Naive thymus-derived CD8-positive, alpha-beta T cell (primary cell): ENCODE measurements at regions of chr15 and their contacts with region 1.

Region 1: GRCh38 chr15:28935326-28935725 is 49.6 kb downstream of the APBA2 start:
- DNase-seq: peak; percentile 55 to 85 (median 65)
- ATAC-seq: peak; percentile 68 to 78
- H3K4me3 Mint-ChIP-seq: peak overlapping the region; percentile 46 to 89 (median 74)
- H3K27ac Mint-ChIP-seq: peak overlapping the region; percentile 87 to 97 (median 97)
- H3K4me1 Mint-ChIP-seq: peaks cover 54 to 89% (median 85%) of the 10 kb centered on the region in 4 donors
- H3K27me3 Mint-ChIP-seq: no peaks in the 10 kb centered on the region

Region 2: DNA sequence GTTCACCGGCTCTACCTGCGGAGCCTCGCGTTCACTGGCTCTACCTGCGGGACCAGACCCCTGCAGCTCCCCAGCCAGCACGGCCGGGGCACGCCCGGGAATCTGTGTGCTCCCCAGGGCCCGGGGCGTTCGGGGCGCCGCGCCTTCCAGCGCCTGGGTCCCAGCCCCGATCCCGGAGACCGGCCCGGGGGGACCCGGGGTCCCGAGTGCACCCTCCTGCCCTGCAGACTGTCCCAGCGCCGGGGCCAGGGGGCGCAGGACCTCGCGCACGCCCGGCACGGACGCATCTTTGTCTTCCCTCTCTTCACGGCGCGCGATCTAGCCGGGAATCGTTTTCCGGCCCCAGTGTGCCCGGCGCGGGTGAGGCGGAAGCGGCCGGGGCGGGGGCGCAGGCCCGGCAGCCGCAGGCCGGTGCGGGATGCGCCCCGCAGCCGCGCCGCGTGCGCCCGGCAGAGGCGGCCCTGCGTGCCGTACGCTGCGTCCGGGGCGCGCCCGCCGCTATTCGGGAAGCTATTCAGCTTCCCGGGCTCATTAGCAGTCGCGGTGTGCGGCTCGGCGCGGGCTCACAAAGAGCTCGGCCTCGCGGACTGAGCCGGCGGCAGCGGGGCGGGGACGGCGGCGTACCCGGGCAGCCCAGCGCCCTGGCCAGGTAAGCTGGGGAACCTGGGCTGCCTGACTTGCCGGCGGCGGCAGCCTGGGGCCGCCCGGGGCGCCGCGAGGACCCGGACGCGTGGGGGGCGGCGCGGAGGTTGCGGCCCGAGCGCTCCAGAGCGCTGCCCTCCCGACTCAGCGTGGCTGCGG is 49.5 kb before region 1 on chr15 and contains the start of gene APBA2:
- POLR2A ChIA-PET with region 1: interaction called, 24 read pairs
- DNase-seq: peak; percentile 37 to 75 (median 58)
- ATAC-seq: peak; percentile 50 to 64
- H3K4me3 Mint-ChIP-seq: peak within 1 kb of the TSS; percentile 88 to 96 (median 93)
- H3K27ac Mint-ChIP-seq: peak within 1 kb of the TSS; percentile 96 to 100 (median 99)
- H3K4me1 Mint-ChIP-seq: peaks cover 38 to 52% (median 48%) of the 10 kb centered on the region in 4 donors
- H3K27me3 Mint-ChIP-seq: no peaks in the 10 kb centered on the region
- polyA plus RNA-seq, gene APBA2: 75.5 to 164 (median 95.1) TPM

Region 3: DNA sequence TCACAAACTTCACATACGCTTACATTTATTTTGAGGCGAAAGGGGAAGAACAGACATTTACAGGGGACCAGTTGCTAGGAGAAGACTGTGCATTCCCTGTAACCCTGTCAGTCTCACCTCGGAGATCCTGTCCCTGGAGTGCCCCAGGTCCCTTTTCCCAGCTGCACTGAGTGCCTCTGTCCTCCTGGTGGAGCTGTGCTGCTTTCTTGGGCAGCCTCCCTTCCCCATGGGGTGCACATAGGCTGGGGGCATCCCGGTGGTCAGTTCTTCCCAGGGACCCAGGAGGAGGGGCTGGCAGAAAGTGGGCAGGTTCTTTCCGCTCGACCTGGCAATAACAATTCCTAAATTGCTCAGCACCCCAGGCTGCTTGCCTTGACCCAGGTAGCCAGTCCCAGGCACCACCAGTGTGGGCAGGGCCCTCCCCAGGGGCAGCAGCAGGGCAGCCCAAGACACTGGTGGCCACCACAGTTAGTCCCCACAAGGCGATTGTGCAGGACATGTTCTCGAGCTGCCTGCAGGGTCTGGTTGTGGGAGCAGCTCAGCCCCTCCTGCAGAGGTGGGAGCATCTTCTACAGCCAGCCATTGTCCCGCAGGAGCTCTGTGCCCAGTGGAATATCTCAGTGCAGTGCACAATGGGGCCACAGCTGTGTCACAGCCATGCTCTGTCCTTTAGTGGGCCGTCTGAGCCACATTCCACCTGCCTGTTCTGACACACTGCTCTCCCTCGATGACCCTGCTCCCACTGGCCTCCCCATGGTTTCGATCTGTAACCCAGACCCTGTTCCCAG is 13.2 kb before region 1 on chr15:
- POLR2A ChIA-PET with region 1: interaction called, 13 read pairs
- DNase-seq: peak in 1 of 10 donors; percentile 49
- ATAC-seq: no peak
- H3K4me3 Mint-ChIP-seq: peak overlapping the region in 9 of 10 donors; percentile 30 to 90 (median 77)
- H3K27ac Mint-ChIP-seq: peak overlapping the region in 9 of 10 donors; percentile 78 to 93 (median 91)
- H3K4me1 Mint-ChIP-seq: peaks cover 49 to 89% (median 84%) of the 10 kb centered on the region in 4 donors
- H3K27me3 Mint-ChIP-seq: no peaks in the 10 kb centered on the region

Region 4: GRCh38 chr15:28947221-28947674 is 11.9 kb after region 1 on chr15:
- POLR2A ChIA-PET with region 1: interaction called, 18 read pairs
- DNase-seq: no peak
- ATAC-seq: no peak
- H3K4me3 Mint-ChIP-seq: peak overlapping the region; percentile 22 to 91 (median 86)
- H3K27ac Mint-ChIP-seq: peak overlapping the region; percentile 85 to 100 (median 97)
- H3K4me1 Mint-ChIP-seq: peaks cover 46 to 91% (median 85%) of the 10 kb centered on the region in 4 donors
- H3K27me3 Mint-ChIP-seq: peaks cover 0 to 1% (median 0%) of the 10 kb centered on the region in 5 donors

Region 5: GRCh38 chr15:28955160-28956008 is 20.1 kb after region 1 on chr15:
- POLR2A ChIA-PET with region 1: interaction called, 18 read pairs
- DNase-seq: peak in 6 of 10 donors; percentile 18 to 58 (median 45)
- ATAC-seq: peak; percentile 78 to 80
- H3K4me3 Mint-ChIP-seq: peak overlapping the region; percentile 62 to 87 (median 82)
- H3K27ac Mint-ChIP-seq: peak overlapping the region; percentile 88 to 96 (median 93)
- H3K4me1 Mint-ChIP-seq: peaks cover 49 to 85% (median 83%) of the 10 kb centered on the region in 4 donors
- H3K27me3 Mint-ChIP-seq: peaks cover 0 to 1% (median 0%) of the 10 kb centered on the region in 5 donors